RWPE1 (cell line): ENCODE measurements at regions of chr4 and their contacts with region 1.

Region 1: GRCh38 chr4:39348371-39349315 is 17.5 kb downstream of the RFC1 start:
- DNase-seq: peak; percentile 4
- H3K27ac ChIP-seq: no peak overlapping the region
- CTCF ChIP-seq: no peak

Region 2: GRCh38 chr4:39243462-39243861 is 105.2 kb before region 1 on chr4:
- CTCF ChIA-PET with region 1: interaction called, 10 read pairs
- POLR2A ChIA-PET with region 1: no interaction called
- DNase-seq: no peak
- H3K27ac ChIP-seq: no peak overlapping the region
- CTCF ChIP-seq: no peak

Region 3: GRCh38 chr4:39495454-39496213 is 147.0 kb after region 1 on chr4:
- CTCF ChIA-PET with region 1: no interaction called
- POLR2A ChIA-PET with region 1: no interaction called
- DNase-seq: peak; percentile 55
- H3K27ac ChIP-seq: no peak overlapping the region
- CTCF ChIP-seq: no peak